ENCODE measurements at regions of chr12 and their contacts with region 1.

Region 1: DNA sequence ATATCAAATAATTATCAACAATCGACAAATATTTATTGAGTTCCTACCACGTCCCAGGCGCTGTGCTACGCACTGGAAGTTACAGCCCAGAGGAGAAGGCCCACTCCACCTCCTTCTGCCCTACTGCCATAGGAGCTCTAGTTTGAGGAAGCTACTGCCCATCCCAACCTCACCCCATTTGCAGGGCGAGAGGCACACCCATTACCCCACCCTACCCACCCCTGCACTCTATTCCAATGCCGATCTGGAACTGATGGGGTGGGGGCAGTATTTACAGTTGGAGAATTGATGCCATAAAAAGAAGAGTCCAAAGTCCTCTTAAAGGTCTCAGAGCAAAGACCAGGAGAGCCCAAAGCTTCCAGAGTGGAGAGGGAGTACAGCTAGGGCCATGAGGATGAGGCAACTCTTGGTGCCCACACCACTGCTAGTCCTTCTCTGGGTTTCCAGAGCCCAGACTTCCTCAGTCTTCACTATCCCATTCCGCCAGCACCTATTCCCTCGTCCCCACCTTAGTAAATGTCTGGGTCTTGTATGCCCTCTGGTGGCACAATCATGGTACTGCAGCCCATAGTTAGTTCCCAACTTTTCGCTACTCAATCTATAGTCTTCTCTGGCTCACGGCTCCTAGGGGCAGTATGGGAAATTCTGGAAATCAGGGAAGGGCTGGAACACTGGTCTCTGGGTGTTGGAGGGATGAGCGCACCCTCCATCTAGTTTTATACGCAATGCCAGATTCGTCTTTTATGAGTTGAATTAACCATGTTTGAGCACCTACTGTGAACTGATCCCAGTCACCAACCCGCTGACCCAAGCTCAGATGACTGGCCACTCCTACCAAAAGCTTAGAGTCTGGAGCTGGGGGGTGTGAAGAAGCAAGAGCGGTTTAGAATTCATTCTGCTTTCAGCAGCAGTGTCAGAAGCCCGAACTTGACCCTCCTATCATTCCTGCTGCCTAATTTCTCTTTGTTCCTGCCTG is 6.9 kb upstream of the ADCY6 start:
- DNase-seq: peak; percentile 22 to 64
- ATAC-seq: peak; percentile 94 to 96
- H3K4me3 ChIP-seq: no peak overlapping the region
- H3K27ac ChIP-seq: no peak overlapping the region
- H3K4me1 ChIP-seq: peaks cover 4 to 6% of the 10 kb centered on the region in 2 donors
- H3K27me3 ChIP-seq: no peaks in the 10 kb centered on the region
- CTCF ChIP-seq: peak; percentile 92 to 96 (median 95)
- POLR2A ChIP-seq: no peak

Region 2: DNA sequence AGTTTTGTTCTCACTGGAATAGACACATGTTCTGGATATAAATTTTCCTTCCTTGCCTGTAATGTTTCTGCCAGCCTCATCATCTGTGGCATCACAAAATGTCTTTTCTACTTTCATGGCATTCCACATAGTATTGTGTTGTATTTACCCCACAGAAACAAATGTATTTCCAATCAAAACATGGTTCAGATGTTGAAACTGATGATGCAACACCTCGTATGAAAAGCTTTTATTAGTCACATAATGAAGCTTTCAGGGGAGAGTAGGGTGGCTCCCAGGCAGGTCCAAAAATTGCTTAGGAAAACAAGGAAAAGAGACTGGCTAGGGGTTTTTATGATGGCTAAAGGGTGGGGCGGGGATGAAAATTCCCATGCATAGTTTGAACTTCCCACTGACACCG is 416.0 kb before region 1 on chr12:
- in situ Hi-C with region 1: no loop called
- intact Hi-C with region 1: no loop called
- DNase-seq: no peak
- ATAC-seq: no peak
- H3K4me3 ChIP-seq: no peak overlapping the region
- H3K27ac ChIP-seq: no peak overlapping the region
- H3K4me1 ChIP-seq: no peaks in the 10 kb centered on the region
- H3K27me3 ChIP-seq: no peaks in the 10 kb centered on the region
- CTCF ChIP-seq: no peak
- POLR2A ChIP-seq: no peak

Region 3: DNA sequence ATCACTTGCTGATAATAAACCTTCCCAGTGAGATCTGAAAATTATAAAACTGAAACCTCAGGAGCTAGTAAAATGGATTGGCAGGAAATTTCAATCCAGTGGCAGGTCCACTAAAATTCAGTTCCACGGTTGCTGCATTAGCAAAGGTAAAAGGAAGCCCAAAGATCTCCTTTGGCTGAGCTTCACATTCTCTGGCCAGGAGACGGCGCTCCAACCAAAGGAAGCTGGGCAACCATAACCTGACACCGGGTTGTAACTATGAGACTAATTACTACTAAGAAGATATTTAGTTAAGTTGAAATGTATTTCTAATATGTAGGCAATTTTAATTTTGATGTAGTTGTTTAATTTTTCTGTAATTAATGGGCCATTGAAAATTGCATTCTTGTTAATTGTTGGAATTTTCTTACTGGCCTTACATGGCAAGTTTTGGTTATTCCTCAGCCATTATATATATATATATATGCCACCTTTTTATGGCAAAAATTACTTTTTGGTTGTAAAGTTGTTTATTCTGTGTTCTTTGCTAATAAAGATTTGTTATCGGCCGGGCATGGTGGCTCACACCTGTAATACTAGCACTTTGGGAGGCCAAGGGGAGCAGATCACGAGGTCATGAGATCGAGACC is 253.4 kb before region 1 on chr12:
- in situ Hi-C with region 1: loop called in 1 of 4 experiments (anchors 25 kb)
- intact Hi-C with region 1: loop called (anchors 5 kb)
- DNase-seq: no peak
- ATAC-seq: no peak
- H3K4me3 ChIP-seq: no peak overlapping the region
- H3K27ac ChIP-seq: no peak overlapping the region
- H3K4me1 ChIP-seq: no peaks in the 10 kb centered on the region
- H3K27me3 ChIP-seq: no peaks in the 10 kb centered on the region
- CTCF ChIP-seq: peak in 2 of 5 experiments; percentile 31 to 40
- POLR2A ChIP-seq: no peak

Region 4: DNA sequence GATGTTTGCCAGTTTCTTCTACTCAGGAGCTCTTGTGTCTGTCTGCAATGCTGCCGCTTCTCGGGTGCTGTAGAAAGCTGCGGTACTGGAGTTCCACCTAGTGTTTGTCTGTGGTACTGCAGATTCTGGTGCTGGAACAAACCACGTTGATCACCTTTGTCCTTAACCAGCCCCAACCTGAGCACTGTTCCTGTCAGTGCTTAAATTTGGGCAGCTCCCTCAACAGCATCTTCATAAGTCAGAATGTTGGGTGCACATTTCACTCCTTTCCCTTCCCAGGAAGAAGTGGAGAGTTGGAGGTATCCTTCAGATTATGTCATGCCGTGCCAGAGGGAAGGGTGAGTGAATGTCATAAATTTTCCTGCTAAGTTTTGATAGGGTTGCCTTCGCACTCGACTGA is 177.2 kb before region 1 on chr12:
- in situ Hi-C with region 1: no loop called
- intact Hi-C with region 1: loop called (anchors 5 kb)
- DNase-seq: peak; percentile 32 to 57
- ATAC-seq: peak; percentile 81 to 89
- H3K4me3 ChIP-seq: no peak overlapping the region
- H3K27ac ChIP-seq: no peak overlapping the region
- H3K4me1 ChIP-seq: no peaks in the 10 kb centered on the region
- H3K27me3 ChIP-seq: peaks cover 0 to 12% (median 3%) of the 10 kb centered on the region in 3 donors
- CTCF ChIP-seq: peak; percentile 77 to 96 (median 84)
- POLR2A ChIP-seq: no peak

Region 5: GRCh38 chr12:48671231-48671856 is 124.4 kb before region 1 on chr12:
- in situ Hi-C with region 1: no loop called
- intact Hi-C with region 1: no loop called
- DNase-seq: peak; percentile 52 to 56
- ATAC-seq: peak; percentile 75 to 87
- H3K4me3 ChIP-seq: no peak overlapping the region
- H3K27ac ChIP-seq: peak overlapping the region; percentile 88 to 99 (median 96)
- H3K4me1 ChIP-seq: peaks cover 51 to 72% of the 10 kb centered on the region in 2 donors
- H3K27me3 ChIP-seq: no peaks in the 10 kb centered on the region
- CTCF ChIP-seq: no peak
- POLR2A ChIP-seq: no peak

Region 6: DNA sequence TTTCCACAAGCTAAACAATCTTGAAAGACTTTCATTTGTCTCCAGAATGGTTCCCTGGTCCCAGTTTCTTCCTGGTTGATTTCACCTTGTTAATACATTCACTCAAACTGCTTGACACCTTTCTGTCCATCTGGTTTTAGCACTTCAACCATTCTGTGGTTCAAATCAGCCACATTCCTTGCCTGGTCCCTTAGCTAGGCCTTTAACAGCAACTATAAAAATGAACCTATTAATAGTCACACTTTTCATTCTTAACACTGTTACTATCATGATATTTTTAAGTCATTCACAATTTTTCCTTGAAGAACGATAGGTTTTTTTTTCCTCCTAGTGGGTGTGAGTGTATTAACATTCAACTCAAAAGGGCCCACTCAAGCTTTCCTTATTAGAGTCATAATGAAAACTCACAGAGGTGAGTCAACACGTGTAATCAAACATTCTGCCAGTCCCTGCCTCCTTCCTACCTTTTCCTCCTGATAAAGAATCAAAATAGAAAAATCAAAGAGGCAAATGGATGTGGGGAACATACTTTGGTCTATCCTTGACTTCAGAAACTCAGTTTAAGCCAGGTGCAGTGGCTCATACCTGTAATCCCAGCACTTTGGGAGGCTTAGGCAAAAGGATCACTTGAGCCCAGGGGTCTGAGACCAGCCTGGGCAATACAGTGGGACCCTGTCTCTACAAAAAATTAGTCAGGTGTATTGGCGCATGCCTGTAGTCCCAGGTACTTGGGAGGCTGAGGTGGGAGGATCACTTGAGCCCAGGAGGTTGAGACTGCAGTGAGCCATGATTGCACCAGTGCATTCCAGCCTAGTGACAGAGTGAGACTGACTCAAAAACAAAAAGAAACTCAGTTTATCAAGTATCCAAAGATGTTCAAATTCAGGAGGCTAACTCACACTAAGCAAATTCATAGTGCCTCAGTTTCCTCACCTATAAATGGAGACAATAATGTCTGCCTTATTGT is 44.7 kb before region 1 on chr12:
- in situ Hi-C with region 1: loop called in 3 of 4 experiments (anchors 5 kb)
- intact Hi-C with region 1: loop called (anchors 1 kb)
- DNase-seq: no peak
- ATAC-seq: no peak
- H3K4me3 ChIP-seq: no peak overlapping the region
- H3K27ac ChIP-seq: no peak overlapping the region
- H3K4me1 ChIP-seq: peaks cover 0 to 3% of the 10 kb centered on the region in 2 donors
- H3K27me3 ChIP-seq: no peaks in the 10 kb centered on the region
- CTCF ChIP-seq: no peak
- POLR2A ChIP-seq: no peak

Region 7: GRCh38 chr12:48758221-48758620 is 37.5 kb before region 1 on chr12:
- in situ Hi-C with region 1: loop called (anchors 5 kb)
- intact Hi-C with region 1: loop called (anchors 1 kb)
- DNase-seq: no peak
- ATAC-seq: no peak
- H3K4me3 ChIP-seq: no peak overlapping the region
- H3K27ac ChIP-seq: no peak overlapping the region
- H3K4me1 ChIP-seq: peaks cover 0 to 3% of the 10 kb centered on the region in 2 donors
- H3K27me3 ChIP-seq: no peaks in the 10 kb centered on the region
- CTCF ChIP-seq: no peak
- POLR2A ChIP-seq: no peak

Region 8: GRCh38 chr12:48764526-48764925 is 31.2 kb before region 1 on chr12:
- in situ Hi-C with region 1: loop called in 1 of 4 experiments (anchors 5 kb)
- intact Hi-C with region 1: no loop called
- DNase-seq: no peak
- ATAC-seq: no peak
- H3K4me3 ChIP-seq: no peak overlapping the region
- H3K27ac ChIP-seq: no peak overlapping the region
- H3K4me1 ChIP-seq: peaks cover 0 to 14% of the 10 kb centered on the region in 2 donors
- H3K27me3 ChIP-seq: no peaks in the 10 kb centered on the region
- CTCF ChIP-seq: no peak
- POLR2A ChIP-seq: no peak

Region 9: GRCh38 chr12:48882315-48882687 is 86.5 kb after region 1 on chr12:
- in situ Hi-C with region 1: no loop called
- intact Hi-C with region 1: no loop called
- DNase-seq: no peak
- ATAC-seq: peak in 1 of 2 donors; percentile 27
- H3K4me3 ChIP-seq: peak overlapping the region in 2 of 4 donors; percentile 12 to 31
- H3K27ac ChIP-seq: peak overlapping the region in 2 of 4 donors; percentile 15 to 40
- H3K4me1 ChIP-seq: no peaks in the 10 kb centered on the region
- H3K27me3 ChIP-seq: peaks cover 0 to 7% (median 6%) of the 10 kb centered on the region in 3 donors
- CTCF ChIP-seq: no peak
- POLR2A ChIP-seq: no peak

Region 10: GRCh38 chr12:48924617-48925303 is 129.0 kb after region 1 on chr12:
- in situ Hi-C with region 1: no loop called
- intact Hi-C with region 1: no loop called
- DNase-seq: peak in 1 of 2 donors; percentile 26
- ATAC-seq: peak; percentile 49 to 78
- H3K4me3 ChIP-seq: peak overlapping the region; percentile 71 to 93 (median 82)
- H3K27ac ChIP-seq: peak overlapping the region in 1 of 4 donors; percentile 18
- H3K4me1 ChIP-seq: peaks cover 0 to 9% of the 10 kb centered on the region in 2 donors
- H3K27me3 ChIP-seq: no peaks in the 10 kb centered on the region
- CTCF ChIP-seq: peak in 4 of 5 experiments; percentile 15 to 67 (median 46)
- POLR2A ChIP-seq: no peak